Heart left ventricle (tissue), 16 donors: ENCODE measurements at regions of chr19 and their contacts with region 1.

Region 1: GRCh38 chr19:7562646-7563393 is 27.3 kb downstream of the PNPLA6 start:
- DNase-seq: no peak
- ATAC-seq: no peak
- H3K4me3 ChIP-seq: no peak overlapping the region
- H3K27ac ChIP-seq: no peak overlapping the region
- H3K4me1 ChIP-seq: no peaks in the 10 kb centered on the region
- H3K27me3 ChIP-seq: no peaks in the 10 kb centered on the region
- CTCF ChIP-seq: no peak
- POLR2A ChIP-seq: no peak

Region 2: DNA sequence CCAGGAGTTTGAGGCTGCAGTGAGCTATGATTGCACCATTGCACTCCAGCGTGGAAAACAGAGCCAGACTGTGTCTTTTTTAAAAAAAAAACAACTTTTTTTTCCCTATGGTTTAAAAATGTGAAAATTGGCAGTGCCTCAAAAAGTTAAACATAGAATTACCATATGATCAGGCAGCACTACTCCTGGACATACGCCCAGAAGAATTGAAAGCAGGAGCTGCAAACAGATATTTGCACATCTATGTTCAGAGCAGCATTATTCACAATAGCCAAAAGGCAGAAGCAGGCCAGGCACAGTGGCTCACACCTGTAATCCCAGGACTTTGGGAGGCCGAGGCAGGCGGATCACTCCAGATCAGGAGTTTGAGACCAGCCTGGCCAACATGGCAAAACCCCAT is 102.3 kb after region 1 on chr19:
- intact Hi-C with region 1: loop called in 1 of 10 experiments (anchors 10 kb)
- DNase-seq: no peak
- ATAC-seq: no peak
- H3K4me3 ChIP-seq: no peak overlapping the region
- H3K27ac ChIP-seq: no peak overlapping the region
- H3K4me1 ChIP-seq: no peaks in the 10 kb centered on the region
- H3K27me3 ChIP-seq: peaks cover 0 to 35% (median 10%) of the 10 kb centered on the region in 9 donors
- CTCF ChIP-seq: no peak
- POLR2A ChIP-seq: no peak

Region 3: DNA sequence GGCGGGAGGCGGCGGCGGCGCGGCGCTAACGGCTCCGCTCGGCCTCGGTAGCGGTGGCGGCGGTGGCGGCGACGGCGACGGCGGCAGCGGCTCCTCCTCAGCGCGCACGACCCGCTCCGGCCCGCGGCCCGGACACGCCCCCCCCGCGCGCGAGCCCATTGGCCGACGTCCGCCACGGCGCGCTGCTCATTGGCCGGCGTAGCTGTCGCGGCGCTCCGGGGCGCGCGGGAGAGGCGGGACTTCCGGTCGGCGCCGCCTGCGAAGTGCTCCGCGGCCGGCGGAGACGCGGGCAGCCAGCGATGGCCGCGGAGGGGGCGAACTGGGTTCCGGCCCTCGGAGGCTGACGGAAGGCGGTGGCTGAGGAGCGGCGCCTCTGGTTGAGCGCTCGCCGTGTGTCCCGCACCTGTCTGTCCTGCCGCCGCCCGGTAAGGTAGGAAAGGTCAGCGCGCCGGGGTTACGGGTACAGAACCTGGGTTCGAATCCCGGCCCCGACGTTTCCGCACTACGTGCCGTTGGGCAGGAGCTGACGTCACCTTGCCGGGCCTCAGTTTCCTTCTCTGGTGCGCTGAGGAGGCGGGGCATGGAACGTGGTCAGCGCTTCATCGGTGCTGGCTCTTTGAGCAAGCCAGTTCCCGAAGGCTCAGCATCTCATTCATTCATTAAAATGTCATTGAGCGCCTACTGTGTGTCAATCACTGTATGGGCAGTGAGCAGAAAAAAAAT is 442.9 kb after region 1 on chr19 and contains the start of gene ELAVL1:
- intact Hi-C with region 1: no loop called
- DNase-seq: peak; percentile 91 to 96 (median 92)
- ATAC-seq: peak; percentile 80 to 94 (median 92)
- H3K4me3 ChIP-seq: peak within 1 kb of the TSS; percentile 59 to 99 (median 83)
- H3K27ac ChIP-seq: peak within 1 kb of the TSS; percentile 53 to 88 (median 84)
- H3K4me1 ChIP-seq: peaks cover 6 to 52% (median 45%) of the 10 kb centered on the region in 12 donors
- H3K27me3 ChIP-seq: no peaks in the 10 kb centered on the region
- CTCF ChIP-seq: peak in 1 of 12 donors; percentile 11
- POLR2A ChIP-seq: peak in 1 of 2 donors; percentile 67
- total RNA-seq, gene ELAVL1: 31.4 to 62.0 (median 53.4) TPM